ENCODE measurements at regions of chr2 and their contacts with region 1.

Region 1: DNA sequence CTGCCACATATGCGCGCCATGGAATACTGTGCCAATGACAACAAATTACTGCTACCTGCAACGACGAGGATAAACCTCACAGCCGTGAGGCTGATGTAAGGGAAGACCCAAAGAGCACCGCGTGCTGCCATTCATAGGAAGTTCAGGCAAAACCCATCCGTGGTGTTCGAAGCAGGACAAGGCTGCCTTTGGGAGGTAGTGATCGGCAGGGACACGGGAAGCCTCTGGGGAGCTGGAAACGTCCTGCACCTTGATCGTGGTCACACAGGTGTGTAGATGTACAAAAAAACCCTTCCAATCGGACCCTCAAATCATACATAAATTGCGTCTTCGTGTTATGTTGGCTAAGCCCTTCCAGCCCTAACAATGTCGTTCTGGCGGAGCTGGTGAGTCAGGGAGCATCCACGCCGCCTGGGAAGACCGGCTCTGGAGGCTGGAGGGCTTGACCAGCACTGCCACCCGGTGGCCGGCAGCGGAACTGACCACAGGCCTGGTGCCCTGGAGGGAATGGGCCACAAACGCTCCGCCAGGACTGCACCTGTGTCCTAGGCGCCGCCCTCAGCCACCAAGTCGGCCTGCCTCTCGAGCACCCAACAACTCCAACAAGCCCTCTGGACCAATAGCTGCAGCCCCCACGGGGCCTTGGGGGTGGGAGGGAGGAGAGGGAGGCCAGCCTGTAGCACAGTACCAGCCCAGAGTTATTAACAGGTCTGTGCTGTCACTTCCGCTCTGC is 4.1 kb upstream of the NEURL3 start:
- DNase-seq: peak; percentile 66 to 68
- ATAC-seq: peak; percentile 58 to 63 (median 61)
- H3K4me3 ChIP-seq: no peak overlapping the region
- H3K4me3 Mint-ChIP-seq: peak overlapping the region; percentile 47
- H3K27ac ChIP-seq: no peak overlapping the region
- H3K27ac Mint-ChIP-seq: peak overlapping the region in 1 of 2 donors; percentile 22
- H3K4me1 ChIP-seq: peaks cover 23% of the 10 kb centered on the region
- H3K4me1 Mint-ChIP-seq: peaks cover 24% of the 10 kb centered on the region in 2 donors
- H3K27me3 ChIP-seq: peaks cover 2% of the 10 kb centered on the region
- H3K27me3 Mint-ChIP-seq: peaks cover 13 to 21% of the 10 kb centered on the region in 2 donors
- CTCF ChIP-seq: peak; percentile 83

Region 2: DNA sequence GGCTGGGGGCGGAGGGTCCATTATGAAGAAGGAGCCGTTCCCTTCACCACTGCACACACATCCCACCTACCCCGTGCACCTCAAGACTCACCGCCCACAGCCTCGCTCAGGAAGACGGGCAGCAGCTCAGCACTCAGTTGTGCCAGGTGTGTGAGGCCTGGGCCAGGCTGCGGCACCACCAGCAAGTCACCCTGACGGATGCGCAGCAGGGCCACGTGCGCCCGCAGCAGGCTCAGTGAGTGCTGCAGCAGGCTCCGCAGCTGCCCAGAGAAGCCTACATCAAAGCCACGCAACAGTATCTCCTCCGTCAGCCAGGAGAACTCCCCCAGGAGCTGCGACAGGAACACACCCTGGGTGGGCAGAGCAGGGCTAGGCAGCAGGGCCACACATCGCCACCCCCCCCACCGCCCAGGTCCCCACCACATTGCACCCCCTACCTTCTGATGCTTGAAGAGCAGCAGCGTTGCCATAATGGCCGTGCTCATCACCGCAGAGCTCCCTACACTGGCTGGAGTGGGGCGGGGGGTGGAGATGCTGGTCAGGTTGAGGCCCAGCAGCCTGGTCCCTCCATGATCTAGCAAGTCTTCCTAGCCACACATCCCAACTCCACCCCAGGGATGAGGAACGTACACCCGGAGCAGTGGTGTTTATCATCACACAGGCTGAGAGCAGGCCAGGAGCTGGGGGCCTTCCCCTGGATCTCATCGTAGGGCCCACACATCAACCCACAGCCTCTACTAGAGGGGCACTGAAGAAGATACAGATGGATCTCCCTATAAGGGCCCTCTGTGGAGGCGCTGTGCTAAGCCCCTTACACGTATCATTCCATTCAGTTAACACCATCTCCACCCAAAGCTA is 484.7 kb before region 1 on chr2:
- intact Hi-C with region 1: loop called (anchors 10 kb)
- DNase-seq: no peak
- ATAC-seq: no peak
- H3K4me3 ChIP-seq: no peak overlapping the region
- H3K4me3 Mint-ChIP-seq: no peak overlapping the region
- H3K27ac ChIP-seq: no peak overlapping the region
- H3K27ac Mint-ChIP-seq: no peak overlapping the region
- H3K4me1 ChIP-seq: no peaks in the 10 kb centered on the region
- H3K4me1 Mint-ChIP-seq: peaks cover 0 to 6% of the 10 kb centered on the region in 2 donors
- H3K27me3 ChIP-seq: no peaks in the 10 kb centered on the region
- H3K27me3 Mint-ChIP-seq: no peaks in the 10 kb centered on the region
- CTCF ChIP-seq: no peak

Region 3: GRCh38 chr2:96407041-96407918 is 102.0 kb before region 1 on chr2:
- intact Hi-C with region 1: loop called (anchors 1 kb)
- DNase-seq: peak; percentile 50 to 93
- ATAC-seq: peak; percentile 86 to 90 (median 87)
- H3K4me3 ChIP-seq: no peak overlapping the region
- H3K4me3 Mint-ChIP-seq: peak overlapping the region; percentile 84
- H3K27ac ChIP-seq: peak overlapping the region; percentile 44
- H3K27ac Mint-ChIP-seq: peak overlapping the region; percentile 76 to 79
- H3K4me1 ChIP-seq: peaks cover 17% of the 10 kb centered on the region
- H3K4me1 Mint-ChIP-seq: peaks cover 20 to 22% of the 10 kb centered on the region in 2 donors
- H3K27me3 ChIP-seq: no peaks in the 10 kb centered on the region
- H3K27me3 Mint-ChIP-seq: no peaks in the 10 kb centered on the region
- CTCF ChIP-seq: peak; percentile 68

Region 4: DNA sequence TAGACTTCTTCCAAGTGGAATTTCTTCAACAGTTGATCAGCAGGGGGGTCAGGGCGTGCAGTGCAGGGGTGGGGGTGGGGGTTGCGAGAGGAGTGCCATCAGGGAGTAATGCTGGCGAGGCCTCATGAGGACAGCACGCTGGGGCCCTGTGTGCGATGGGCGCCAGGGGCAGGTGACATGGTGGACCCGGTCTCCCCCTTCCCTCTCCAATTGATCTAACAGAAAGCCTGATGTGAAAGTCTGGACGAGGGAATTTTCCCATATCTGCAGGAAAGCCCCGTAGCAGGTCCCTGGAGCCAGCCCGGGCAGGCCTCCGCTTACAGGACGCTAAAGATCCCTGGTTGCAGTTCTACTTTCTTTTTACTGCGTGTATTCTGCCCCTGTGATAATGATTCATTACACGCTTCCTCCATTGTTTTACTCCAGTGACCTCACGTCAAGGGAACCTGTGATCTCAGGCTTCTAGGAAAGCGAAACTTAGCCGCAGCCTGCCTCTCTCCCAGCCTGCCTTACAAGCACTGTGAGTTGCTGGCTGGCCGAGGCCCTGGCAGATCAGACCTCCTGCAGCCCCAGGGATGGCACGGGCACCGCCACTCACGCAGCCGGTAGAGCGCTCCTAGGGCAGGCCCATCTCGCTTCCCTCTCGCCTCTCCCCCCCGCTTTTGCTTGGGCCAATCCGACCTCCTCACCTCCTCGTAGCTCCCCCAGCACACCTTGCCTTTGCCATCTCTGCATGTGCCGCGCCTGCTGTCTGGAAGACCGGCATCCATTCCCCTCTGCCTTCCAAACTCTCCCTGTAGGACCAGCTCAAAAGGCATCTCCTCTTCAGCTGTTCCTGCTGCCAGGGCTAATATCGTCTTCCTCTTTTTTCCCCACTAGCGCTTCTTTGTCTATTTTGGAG is 23.3 kb before region 1 on chr2:
- intact Hi-C with region 1: loop called (anchors 2 kb)
- DNase-seq: peak; percentile 56 to 88
- ATAC-seq: peak; percentile 91 to 94 (median 93)
- H3K4me3 ChIP-seq: peak overlapping the region; percentile 36
- H3K4me3 Mint-ChIP-seq: peak overlapping the region; percentile 93
- H3K27ac ChIP-seq: peak overlapping the region; percentile 76
- H3K27ac Mint-ChIP-seq: peak overlapping the region; percentile 90 to 92
- H3K4me1 ChIP-seq: peaks cover 13% of the 10 kb centered on the region
- H3K4me1 Mint-ChIP-seq: peaks cover 18 to 23% of the 10 kb centered on the region in 2 donors
- H3K27me3 ChIP-seq: no peaks in the 10 kb centered on the region
- H3K27me3 Mint-ChIP-seq: peaks cover 0 to 9% of the 10 kb centered on the region in 2 donors
- CTCF ChIP-seq: no peak

Region 5: DNA sequence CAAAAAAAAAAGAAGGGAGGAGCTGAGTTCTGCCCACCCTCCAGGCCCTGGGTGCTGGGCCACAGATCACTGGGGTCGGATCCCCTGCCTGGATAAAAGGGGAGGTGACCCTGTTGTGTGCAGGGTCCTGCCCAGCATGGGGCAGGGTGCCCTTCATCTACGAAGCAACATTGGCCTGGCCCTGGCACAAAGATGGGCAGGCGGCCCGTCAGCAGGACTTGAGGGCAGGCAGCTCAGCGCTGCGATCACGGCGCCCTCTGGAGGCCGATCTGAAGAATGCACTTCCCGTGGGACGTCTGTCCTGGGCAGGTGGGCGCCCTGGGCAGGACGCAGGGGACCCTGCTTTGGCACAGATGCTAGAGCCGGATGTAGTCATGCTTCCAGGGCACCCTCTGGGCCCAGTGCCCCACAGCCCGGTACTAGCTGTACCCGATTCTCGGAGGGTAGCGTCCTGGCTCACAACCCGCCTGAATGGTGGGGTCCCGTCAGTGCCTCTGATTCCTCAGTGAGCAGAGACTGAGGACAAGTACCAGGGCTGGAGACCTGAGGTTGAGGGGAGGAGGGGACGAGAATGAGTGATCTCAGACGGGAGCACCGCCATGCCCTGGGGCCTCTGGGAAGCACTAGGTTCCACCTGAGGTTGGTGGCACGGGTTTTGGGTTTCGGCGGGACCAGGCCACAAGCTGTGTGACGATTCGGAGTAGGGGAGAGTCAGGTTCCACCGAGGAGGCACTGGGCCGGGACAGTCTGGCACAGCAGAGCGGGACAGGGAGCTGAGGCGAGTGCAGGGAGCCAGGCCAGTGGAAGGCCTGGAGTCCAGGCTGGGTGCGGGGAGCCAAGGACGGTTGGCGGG is 45.2 kb after region 1 on chr2:
- intact Hi-C with region 1: loop called (anchors 1 kb)
- DNase-seq: peak; percentile 66 to 88
- ATAC-seq: peak; percentile 79 to 92 (median 80)
- H3K4me3 ChIP-seq: no peak overlapping the region
- H3K4me3 Mint-ChIP-seq: no peak overlapping the region
- H3K27ac ChIP-seq: no peak overlapping the region
- H3K27ac Mint-ChIP-seq: peak overlapping the region in 1 of 2 donors; percentile 38
- H3K4me1 ChIP-seq: peaks cover 17% of the 10 kb centered on the region
- H3K4me1 Mint-ChIP-seq: peaks cover 5 to 32% of the 10 kb centered on the region in 2 donors
- H3K27me3 ChIP-seq: no peaks in the 10 kb centered on the region
- H3K27me3 Mint-ChIP-seq: no peaks in the 10 kb centered on the region
- CTCF ChIP-seq: peak; percentile 100

Region 6: GRCh38 chr2:96783388-96783787 is 274.1 kb after region 1 on chr2:
- intact Hi-C with region 1: no loop called
- DNase-seq: no peak
- ATAC-seq: no peak
- H3K4me3 ChIP-seq: no peak overlapping the region
- H3K4me3 Mint-ChIP-seq: no peak overlapping the region
- H3K27ac ChIP-seq: no peak overlapping the region
- H3K27ac Mint-ChIP-seq: no peak overlapping the region
- H3K4me1 ChIP-seq: no peaks in the 10 kb centered on the region
- H3K4me1 Mint-ChIP-seq: no peaks in the 10 kb centered on the region
- H3K27me3 ChIP-seq: no peaks in the 10 kb centered on the region
- H3K27me3 Mint-ChIP-seq: no peaks in the 10 kb centered on the region
- CTCF ChIP-seq: no peak